ENCODE measurements at regions of chr2 and their contacts with region 1.

Region 1: DNA sequence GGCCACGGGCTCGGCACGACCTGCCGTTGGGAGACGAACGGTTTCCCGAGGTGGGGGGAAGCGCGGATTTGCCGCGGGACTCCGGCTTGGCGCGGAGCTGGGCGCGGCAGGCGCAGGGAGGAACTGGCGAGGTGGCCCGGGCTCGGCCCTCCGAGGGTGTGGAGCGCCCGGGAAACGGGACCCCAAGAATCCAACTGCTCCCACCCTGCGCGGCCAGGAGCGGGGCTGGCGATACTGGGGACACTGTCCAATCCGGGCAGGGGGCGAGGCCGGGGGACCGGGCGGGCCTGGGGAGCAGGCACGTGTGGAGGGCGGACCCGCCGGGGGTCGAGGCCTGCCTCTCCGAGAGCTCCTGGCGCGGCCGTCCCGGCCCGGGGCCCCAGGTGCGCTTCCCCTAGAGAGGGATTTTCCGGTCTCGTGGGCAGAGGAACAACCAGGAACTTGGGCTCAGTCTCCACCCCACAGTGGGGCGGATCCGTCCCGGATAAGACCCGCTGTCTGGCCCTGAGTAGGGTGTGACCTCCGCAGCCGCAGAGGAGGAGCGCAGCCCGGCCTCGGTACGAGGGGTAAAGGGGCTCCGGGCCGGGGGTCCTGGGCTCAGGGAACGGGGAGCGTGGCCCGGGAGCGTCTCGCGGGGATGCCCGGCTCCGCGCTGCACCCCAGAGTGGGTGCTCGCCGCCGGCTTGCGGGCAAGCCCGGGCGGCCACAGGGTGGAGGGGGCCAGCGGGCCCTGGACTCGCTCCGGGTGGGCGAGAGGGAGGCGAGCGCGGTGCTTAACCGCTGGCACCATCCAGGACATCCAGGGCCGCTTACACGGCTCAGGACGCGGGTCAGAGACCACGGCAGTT is at the start of gene ANXA4:
- DNase-seq: no peak
- ATAC-seq: peak; percentile 91
- H3K4me3 ChIP-seq: peak within 1 kb of the TSS; percentile 71
- H3K27ac ChIP-seq: peak within 1 kb of the TSS; percentile 95
- H3K4me1 ChIP-seq: peaks cover 6% of the 10 kb centered on the region
- H3K27me3 ChIP-seq: no peaks in the 10 kb centered on the region
- CTCF ChIP-seq: no peak
- EP300 ChIP-seq: peak in 1 of 2 experiments; percentile 34; a peak in 1 of 4 replicates
- POLR2A ChIP-seq: peak; percentile 89
- RAD21 ChIP-seq: no peak
- polyA plus RNA-seq, gene ANXA4: 64.6 to 73.1 TPM

Region 2: DNA sequence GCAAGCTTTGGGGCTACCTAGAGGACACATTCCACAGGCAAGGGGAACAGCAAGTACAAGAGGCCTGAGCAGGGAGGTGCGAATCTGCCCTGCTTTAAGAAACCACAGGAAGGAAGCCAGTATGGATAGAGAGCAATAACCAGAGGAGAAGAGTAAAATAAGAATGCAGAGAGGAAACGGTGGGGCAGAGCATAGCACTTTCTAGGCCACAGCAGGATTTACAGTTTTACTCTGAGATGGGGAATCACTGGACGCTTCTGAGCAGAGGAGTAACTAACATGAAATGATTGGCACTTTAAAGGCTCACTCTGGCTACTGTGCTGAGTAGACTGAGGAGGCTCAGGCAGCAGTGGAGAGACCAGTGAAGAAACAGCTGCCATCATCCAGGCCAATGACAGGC is 122.1 kb before region 1 on chr2:
- CTCF ChIA-PET with region 1: no interaction called
- POLR2A ChIA-PET with region 1: no interaction called
- RAD21 ChIA-PET with region 1: no interaction called
- SMC1A ChIA-PET with region 1: no interaction called
- in situ Hi-C with region 1: no loop called
- intact Hi-C with region 1: no loop called
- DNase-seq: no peak
- ATAC-seq: peak; percentile 45
- H3K4me3 ChIP-seq: no peak overlapping the region
- H3K27ac ChIP-seq: no peak overlapping the region; the same call in 1 of the 2 replicates
- H3K4me1 ChIP-seq: peaks cover 34% of the 10 kb centered on the region
- H3K27me3 ChIP-seq: no peaks in the 10 kb centered on the region
- CTCF ChIP-seq: no peak
- EP300 ChIP-seq: no peak
- POLR2A ChIP-seq: no peak
- RAD21 ChIP-seq: no peak

Region 3: GRCh38 chr2:69694894-69695849 is 46.7 kb before region 1 on chr2:
- CTCF ChIA-PET with region 1: no interaction called
- POLR2A ChIA-PET with region 1: no interaction called
- RAD21 ChIA-PET with region 1: no interaction called
- SMC1A ChIA-PET with region 1: no interaction called
- in situ Hi-C with region 1: no loop called
- intact Hi-C with region 1: no loop called
- DNase-seq: no peak
- ATAC-seq: no peak
- H3K4me3 ChIP-seq: no peak overlapping the region
- H3K27ac ChIP-seq: no peak overlapping the region
- H3K4me1 ChIP-seq: peaks cover 13% of the 10 kb centered on the region
- H3K27me3 ChIP-seq: no peaks in the 10 kb centered on the region
- CTCF ChIP-seq: no peak
- EP300 ChIP-seq: no peak
- POLR2A ChIP-seq: no peak
- RAD21 ChIP-seq: no peak

Region 4: GRCh38 chr2:69762513-69763497 is 21.0 kb after region 1 on chr2:
- CTCF ChIA-PET with region 1: interaction called, 10 read pairs
- POLR2A ChIA-PET with region 1: interaction called, 61 read pairs
- RAD21 ChIA-PET with region 1: interaction called, 26 read pairs
- SMC1A ChIA-PET with region 1: interaction called, 164 read pairs
- in situ Hi-C with region 1: no loop called
- intact Hi-C with region 1: no loop called
- DNase-seq: no peak
- ATAC-seq: peak; percentile 46
- H3K4me3 ChIP-seq: no peak overlapping the region
- H3K27ac ChIP-seq: peak overlapping the region; percentile 9; the same call in 1 of the 2 replicates
- H3K4me1 ChIP-seq: peaks cover 44% of the 10 kb centered on the region
- H3K27me3 ChIP-seq: no peaks in the 10 kb centered on the region
- CTCF ChIP-seq: no peak
- EP300 ChIP-seq: no peak
- POLR2A ChIP-seq: no peak
- RAD21 ChIP-seq: no peak

Region 5: DNA sequence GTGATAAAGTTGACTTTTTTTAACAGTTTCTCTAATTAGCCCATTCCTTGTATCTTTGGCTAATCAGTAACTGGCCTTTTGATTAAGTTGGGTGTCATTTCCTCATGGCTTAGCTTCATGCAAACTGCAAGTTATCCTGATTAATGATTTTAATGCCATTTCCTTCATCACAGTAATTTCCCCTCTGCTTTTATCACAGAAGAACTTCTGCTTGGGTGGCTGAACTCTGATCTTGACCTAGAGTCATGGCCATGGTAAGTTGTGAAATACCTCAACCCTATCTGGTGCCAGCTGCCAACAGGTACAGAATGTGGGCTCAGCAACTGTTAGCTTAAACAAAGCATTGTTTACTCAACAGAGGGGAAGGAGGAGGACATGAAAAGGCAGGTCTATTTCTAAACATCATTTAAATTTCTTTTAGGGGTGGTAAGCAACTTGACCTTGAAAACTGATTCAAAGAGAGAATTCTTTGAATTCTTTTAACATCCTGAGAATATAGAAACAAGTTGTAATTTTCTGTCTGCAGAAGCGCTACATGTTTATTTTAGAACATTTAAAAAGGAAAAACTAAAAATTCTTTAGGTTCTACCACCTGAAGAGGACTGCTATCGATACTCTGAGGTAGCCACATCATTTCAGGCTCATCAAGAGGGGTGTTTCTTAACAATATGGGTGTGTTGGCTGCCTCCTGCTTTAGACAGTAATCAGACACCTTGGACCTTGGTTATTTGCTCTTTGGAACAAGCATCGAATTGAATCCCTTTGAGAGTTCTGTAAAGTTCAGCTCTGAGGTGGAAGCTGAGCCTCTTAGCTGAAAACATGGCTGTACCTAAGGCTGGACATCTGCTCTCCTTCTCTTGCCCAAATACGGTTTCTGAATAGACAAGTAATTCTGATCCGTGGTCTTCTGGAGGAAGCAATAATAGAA is 39.7 kb after region 1 on chr2:
- CTCF ChIA-PET with region 1: interaction called, 4 read pairs
- POLR2A ChIA-PET with region 1: interaction called, 12 read pairs
- RAD21 ChIA-PET with region 1: interaction called, 6 read pairs
- SMC1A ChIA-PET with region 1: interaction called, 14 read pairs
- in situ Hi-C with region 1: no loop called
- intact Hi-C with region 1: no loop called
- DNase-seq: no peak
- ATAC-seq: peak; percentile 88
- H3K4me3 ChIP-seq: 0 out of 2 replicates have a peak overlapping the region, but pooled peaks have one; percentile 21
- H3K27ac ChIP-seq: peak overlapping the region; percentile 42
- H3K4me1 ChIP-seq: peaks cover 14% of the 10 kb centered on the region
- H3K27me3 ChIP-seq: no peaks in the 10 kb centered on the region
- CTCF ChIP-seq: no peak
- EP300 ChIP-seq: no peak
- POLR2A ChIP-seq: no peak
- RAD21 ChIP-seq: no peak

Region 6: GRCh38 chr2:69798909-69799526 is 57.2 kb after region 1 on chr2:
- CTCF ChIA-PET with region 1: interaction called, 12 read pairs
- POLR2A ChIA-PET with region 1: interaction called, 14 read pairs
- RAD21 ChIA-PET with region 1: interaction called, 17 read pairs
- SMC1A ChIA-PET with region 1: interaction called, 70 read pairs
- in situ Hi-C with region 1: no loop called
- intact Hi-C with region 1: loop called (anchors 5 kb)
- DNase-seq: no peak
- ATAC-seq: peak; percentile 68
- H3K4me3 ChIP-seq: peak overlapping the region; percentile 69
- H3K27ac ChIP-seq: peak overlapping the region; percentile 77
- H3K4me1 ChIP-seq: peaks cover 69% of the 10 kb centered on the region
- H3K27me3 ChIP-seq: no peaks in the 10 kb centered on the region
- CTCF ChIP-seq: no peak
- EP300 ChIP-seq: no peak
- POLR2A ChIP-seq: no peak
- RAD21 ChIP-seq: no peak

Region 7: DNA sequence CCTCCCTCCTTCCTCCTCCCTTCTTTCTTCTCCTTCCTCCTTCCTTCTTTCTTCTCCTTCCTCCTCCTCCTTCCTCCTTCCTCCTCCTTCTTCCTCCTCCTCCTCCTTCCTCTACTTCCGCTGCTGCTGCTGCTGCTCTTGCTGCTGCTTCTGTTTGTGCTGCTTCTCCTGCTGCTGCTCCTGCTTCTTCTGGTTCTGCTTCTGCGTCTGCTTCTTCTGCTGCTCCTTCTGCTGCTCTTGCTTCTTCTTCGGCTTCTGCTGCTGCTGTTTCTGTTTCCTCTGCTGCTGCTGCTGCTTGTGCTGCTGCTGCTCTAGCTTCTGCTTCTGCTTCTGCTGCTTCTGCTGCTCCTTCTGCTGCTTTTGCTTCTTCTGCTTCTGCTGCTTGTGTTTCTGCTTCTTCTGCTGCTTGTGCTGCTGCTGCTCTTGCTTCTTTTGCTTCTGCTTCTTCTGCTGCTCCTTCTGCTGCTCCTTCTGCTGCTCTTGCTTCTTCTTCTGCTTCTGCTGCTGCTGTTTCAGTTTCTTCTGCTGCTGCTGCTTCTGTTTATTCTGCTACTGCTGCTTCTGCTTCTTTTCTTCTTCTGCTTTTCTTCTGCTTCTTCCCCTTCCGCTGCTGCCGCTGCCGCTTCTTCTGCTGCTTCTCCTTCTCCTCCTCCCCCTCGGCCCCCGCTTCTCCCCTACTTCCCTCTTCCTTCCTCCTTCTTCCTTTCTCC is 160.5 kb after region 1 on chr2:
- CTCF ChIA-PET with region 1: no interaction called
- POLR2A ChIA-PET with region 1: no interaction called
- RAD21 ChIA-PET with region 1: no interaction called
- SMC1A ChIA-PET with region 1: no interaction called
- in situ Hi-C with region 1: no loop called
- intact Hi-C with region 1: no loop called
- DNase-seq: peak; percentile 21
- ATAC-seq: peak; percentile 67
- H3K4me3 ChIP-seq: peak overlapping the region; percentile 71
- H3K27ac ChIP-seq: peak overlapping the region; percentile 60
- H3K4me1 ChIP-seq: peaks cover 4% of the 10 kb centered on the region; the same call in 1 of the 2 replicates
- H3K27me3 ChIP-seq: no peaks in the 10 kb centered on the region
- CTCF ChIP-seq: no peak
- EP300 ChIP-seq: no peak
- POLR2A ChIP-seq: no peak
- RAD21 ChIP-seq: no peak

Measured in GM12878 (cell line).